Tibial artery (tissue), 4 donors: ENCODE measurements at regions of chr10 and their contacts with region 1.

Region 1: GRCh38 chr10:35126530-35127296 is at the start of gene CREM:
- DNase-seq: peak; percentile 99 to 100
- H3K4me3 ChIP-seq: peak within 1 kb of the TSS; percentile 68 to 89
- H3K27ac ChIP-seq: peak within 1 kb of the TSS; percentile 96 to 100
- H3K4me1 ChIP-seq: peaks cover 0 to 47% (median 8%) of the 10 kb centered on the region in 4 donors
- H3K27me3 ChIP-seq: no peaks in the 10 kb centered on the region
- CTCF ChIP-seq: peak; percentile 88 to 91

Region 2: GRCh38 chr10:34689053-34689452 is 437.7 kb before region 1 on chr10:
- intact Hi-C with region 1: no loop called
- DNase-seq: peak in 1 of 2 donors; percentile 35
- H3K4me3 ChIP-seq: no peak overlapping the region
- H3K27ac ChIP-seq: no peak overlapping the region
- H3K4me1 ChIP-seq: peaks cover 0 to 16% (median 5%) of the 10 kb centered on the region in 4 donors
- H3K27me3 ChIP-seq: no peaks in the 10 kb centered on the region
- CTCF ChIP-seq: no peak

Region 3: DNA sequence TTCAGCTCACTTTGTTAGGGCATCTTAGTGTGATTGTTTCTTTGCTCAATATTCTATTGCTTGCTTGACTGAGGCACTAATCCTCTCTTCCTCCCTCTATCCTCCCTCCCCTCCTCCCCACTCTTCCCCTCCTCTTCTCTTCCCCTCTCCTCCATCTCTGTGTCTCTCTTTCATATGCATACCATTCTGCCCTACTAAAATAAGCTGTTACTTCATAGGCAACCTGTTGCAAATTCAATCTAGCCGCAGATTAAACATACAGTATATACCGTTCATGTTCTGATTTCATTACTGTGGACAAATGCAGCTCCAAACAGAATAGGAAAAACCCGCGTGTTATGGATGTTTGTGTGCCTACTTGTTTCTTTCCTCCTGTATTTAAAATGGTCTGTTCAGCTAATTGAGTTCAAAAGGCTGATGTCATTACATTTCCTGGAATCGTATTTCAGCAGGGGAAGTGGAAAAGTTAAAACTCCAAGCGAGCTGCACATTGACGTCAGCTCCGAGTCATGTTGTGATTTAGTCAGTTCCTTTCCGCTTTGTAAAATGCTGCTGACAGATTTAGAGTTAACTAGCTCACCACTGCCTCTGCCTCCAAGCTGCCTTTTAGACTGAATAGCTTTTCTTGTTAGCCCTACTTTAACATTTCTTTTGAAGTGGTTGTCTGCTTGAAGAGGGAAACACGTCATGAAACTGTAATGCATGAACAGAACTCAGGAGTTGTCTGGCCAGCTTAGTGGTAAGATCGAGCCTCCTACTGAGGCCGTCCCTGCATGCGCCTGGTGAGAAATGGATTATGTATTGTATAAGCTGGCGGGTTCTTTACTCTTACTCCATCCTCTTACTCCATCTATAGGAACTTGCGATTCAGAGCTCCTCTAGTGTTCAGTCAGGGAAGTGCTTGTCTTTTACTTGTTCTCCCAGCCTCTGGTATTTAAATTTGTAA is 68.9 kb after region 1 on chr10:
- intact Hi-C with region 1: loop called (anchors 5 kb)
- DNase-seq: peak; percentile 61 to 88
- H3K4me3 ChIP-seq: peak overlapping the region; percentile 48 to 57
- H3K27ac ChIP-seq: peak overlapping the region; percentile 90 to 91
- H3K4me1 ChIP-seq: peaks cover 0 to 15% (median 0%) of the 10 kb centered on the region in 4 donors
- H3K27me3 ChIP-seq: no peaks in the 10 kb centered on the region
- CTCF ChIP-seq: peak; percentile 85 to 87

Region 4: DNA sequence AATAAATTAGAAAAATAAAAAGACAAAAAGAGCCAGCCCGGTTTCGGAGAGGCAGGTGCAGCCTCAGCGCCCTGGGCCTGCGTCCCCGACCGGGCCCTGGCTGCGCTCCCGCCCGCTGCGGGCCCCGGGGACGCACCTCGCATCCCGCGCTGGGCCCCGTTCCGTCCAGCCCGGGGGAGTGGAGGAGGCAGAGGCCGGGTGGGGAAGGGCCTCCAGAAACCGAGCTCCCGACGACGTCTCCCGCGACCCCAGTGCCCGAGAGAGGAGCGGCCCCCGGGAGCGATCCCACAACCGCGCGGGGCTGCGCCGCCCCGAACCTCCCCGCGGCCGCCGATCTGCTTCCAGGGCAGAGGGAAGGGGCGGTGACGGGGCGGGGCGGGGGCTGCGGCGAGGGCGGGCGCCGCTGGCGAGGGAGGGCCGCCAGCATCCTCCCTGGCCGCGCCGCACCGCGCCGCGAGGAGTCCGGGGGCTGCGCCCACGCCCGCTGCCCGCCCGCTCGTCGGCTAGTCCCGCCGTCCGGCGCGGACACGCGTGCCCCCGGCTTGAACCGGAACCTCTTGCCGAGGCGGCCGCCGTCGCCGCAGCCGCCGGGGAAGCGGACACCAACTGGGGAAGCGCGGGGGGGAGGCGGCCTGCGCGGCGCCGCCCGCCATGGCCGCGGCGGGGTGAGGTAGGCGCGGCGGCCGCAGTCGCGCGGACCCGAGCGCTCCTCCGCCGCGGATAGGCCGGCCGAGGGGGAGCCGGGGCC is 209.5 kb after region 1 on chr10 and contains the start of gene CCNY:
- intact Hi-C with region 1: loop called (anchors 10 kb)
- DNase-seq: peak; percentile 63 to 85
- H3K4me3 ChIP-seq: peak within 1 kb of the TSS; percentile 98
- H3K27ac ChIP-seq: peak within 1 kb of the TSS; percentile 89 to 94
- H3K4me1 ChIP-seq: peaks cover 0 to 75% (median 41%) of the 10 kb centered on the region in 4 donors
- H3K27me3 ChIP-seq: no peaks in the 10 kb centered on the region
- CTCF ChIP-seq: no peak

Region 5: DNA sequence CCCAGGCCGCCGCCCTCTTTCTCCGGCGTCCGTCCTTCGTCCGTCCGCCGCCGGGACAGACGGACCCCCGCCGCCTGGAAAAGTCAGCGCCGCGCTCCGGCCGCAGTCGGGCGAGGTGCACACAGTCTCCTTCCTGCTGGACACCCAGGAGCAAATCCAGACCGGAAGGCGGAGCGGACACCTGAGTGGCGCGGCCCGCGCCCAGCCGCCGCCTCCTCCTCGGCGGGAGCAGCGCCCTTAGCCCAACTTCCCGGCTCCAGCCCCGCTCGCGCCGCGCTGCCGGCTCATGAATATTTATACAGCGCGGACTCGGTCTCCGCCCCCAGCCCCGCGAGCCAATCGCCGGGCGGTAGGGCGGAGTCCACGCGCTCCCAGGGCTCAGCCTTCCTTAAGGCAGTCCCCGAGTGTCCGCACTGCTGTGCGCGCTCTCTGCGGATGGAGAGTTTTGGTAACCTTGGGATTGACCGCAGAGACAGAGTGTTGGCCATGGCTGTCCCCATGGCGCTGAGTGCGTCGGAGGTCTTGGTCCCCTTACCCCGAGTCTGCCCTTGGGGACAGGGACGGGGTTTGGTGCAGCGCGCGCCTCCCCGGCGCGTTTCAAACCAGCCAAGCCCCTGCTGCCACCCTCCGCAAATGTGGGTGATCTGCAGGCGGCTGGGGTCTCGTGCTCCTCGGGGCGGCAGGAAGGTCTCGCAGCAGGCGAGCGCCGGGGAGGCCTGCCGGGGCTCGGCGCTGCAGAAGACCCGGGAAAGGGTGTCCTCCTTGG is 515.5 kb after region 1 on chr10 and contains the start of gene FZD8:
- intact Hi-C with region 1: loop called (anchors 10 kb)
- DNase-seq: peak; percentile 91 to 95
- H3K4me3 ChIP-seq: peak within 1 kb of the TSS; percentile 78 to 81
- H3K27ac ChIP-seq: peak within 1 kb of the TSS; percentile 86 to 94
- H3K4me1 ChIP-seq: peaks cover 0 to 38% (median 23%) of the 10 kb centered on the region in 4 donors
- H3K27me3 ChIP-seq: no peaks in the 10 kb centered on the region
- CTCF ChIP-seq: no peak

Region 6: GRCh38 chr10:35822316-35822715 is 695.6 kb after region 1 on chr10:
- intact Hi-C with region 1: loop called (anchors 10 kb)
- DNase-seq: peak; percentile 94 to 99
- H3K4me3 ChIP-seq: no peak overlapping the region
- H3K27ac ChIP-seq: peak overlapping the region; percentile 60 to 74
- H3K4me1 ChIP-seq: peaks cover 0 to 48% (median 36%) of the 10 kb centered on the region in 4 donors
- H3K27me3 ChIP-seq: no peaks in the 10 kb centered on the region
- CTCF ChIP-seq: peak; percentile 64 to 83